ENCODE measurements at regions of chr9 and their contacts with region 1.

Region 1: GRCh38 chr9:131053896-131054295 is 42.4 kb upstream of the AIF1L start:
- DNase-seq: no peak
- H3K4me3 ChIP-seq: no peak overlapping the region
- H3K27ac ChIP-seq: no peak overlapping the region
- H3K4me1 ChIP-seq: no peaks in the 10 kb centered on the region
- H3K27me3 ChIP-seq: no peaks in the 10 kb centered on the region
- CTCF ChIP-seq: no peak
- EP300 ChIP-seq: no peak
- POLR2A ChIP-seq: no peak
- RAD21 ChIP-seq: no peak

Region 2: DNA sequence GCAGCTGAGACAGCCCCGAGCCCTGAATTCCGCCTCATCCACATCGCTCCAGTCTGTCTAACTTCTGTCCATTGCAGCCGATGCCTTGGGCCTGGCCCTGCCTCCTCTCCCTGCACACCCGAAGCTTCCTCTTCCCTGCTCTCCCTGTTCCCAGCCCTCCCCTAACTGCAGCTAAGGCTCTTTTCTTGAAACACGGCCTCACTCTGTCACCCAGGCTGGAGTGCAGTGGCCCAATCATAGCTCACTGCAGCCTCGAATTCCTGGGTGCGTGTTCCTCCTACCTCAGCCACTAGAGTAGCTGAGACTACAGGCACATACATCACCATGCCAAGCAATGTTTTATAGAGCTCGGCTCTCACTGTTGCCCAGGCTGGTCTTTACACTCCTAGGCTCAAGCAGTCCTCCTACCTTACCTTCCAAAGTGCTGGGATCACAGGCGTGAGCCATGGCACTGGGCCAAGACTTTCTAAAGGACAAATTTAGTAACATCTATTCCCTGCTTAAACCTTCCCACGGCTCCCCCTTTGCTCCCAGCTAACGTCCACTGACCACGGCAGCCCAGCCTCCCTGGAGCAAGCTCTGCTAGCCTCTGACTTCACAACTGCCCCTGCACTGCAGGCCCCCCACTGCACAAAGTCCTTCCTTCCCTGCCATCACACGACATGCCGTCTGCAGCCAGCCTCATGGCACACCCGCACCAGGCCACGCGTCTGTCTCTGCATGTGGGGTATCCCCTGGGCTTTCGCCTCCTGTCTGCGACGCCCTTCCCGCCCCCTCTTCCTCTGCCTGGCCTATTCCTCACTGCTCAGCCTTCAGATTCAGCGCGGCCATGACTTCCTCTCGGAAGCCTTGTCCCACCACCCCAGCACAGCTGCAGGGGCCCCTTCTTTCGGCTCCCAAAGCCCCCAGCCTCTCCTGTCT is 16.3 kb before region 1 on chr9:
- CTCF ChIA-PET with region 1: interaction called, 52 read pairs
- POLR2A ChIA-PET with region 1: interaction called, 3 read pairs
- DNase-seq: no peak
- H3K4me3 ChIP-seq: no peak overlapping the region
- H3K27ac ChIP-seq: no peak overlapping the region
- H3K4me1 ChIP-seq: no peaks in the 10 kb centered on the region; a peak in 2 of 7 replicates
- H3K27me3 ChIP-seq: no peaks in the 10 kb centered on the region
- CTCF ChIP-seq: no peak
- EP300 ChIP-seq: no peak
- POLR2A ChIP-seq: no peak
- RAD21 ChIP-seq: no peak

Region 3: GRCh38 chr9:131068076-131068816 is 14.3 kb after region 1 on chr9:
- CTCF ChIA-PET with region 1: interaction called, 54 read pairs
- POLR2A ChIA-PET with region 1: no interaction called
- DNase-seq: no peak
- H3K4me3 ChIP-seq: no peak overlapping the region
- H3K27ac ChIP-seq: no peak overlapping the region
- H3K4me1 ChIP-seq: no peaks in the 10 kb centered on the region
- H3K27me3 ChIP-seq: no peaks in the 10 kb centered on the region
- CTCF ChIP-seq: no peak
- EP300 ChIP-seq: no peak
- POLR2A ChIP-seq: no peak
- RAD21 ChIP-seq: no peak

Region 4: GRCh38 chr9:131076347-131077195 is 22.7 kb after region 1 on chr9:
- CTCF ChIA-PET with region 1: interaction called, 54 read pairs
- POLR2A ChIA-PET with region 1: no interaction called
- DNase-seq: no peak
- H3K4me3 ChIP-seq: no peak overlapping the region
- H3K27ac ChIP-seq: no peak overlapping the region
- H3K4me1 ChIP-seq: no peaks in the 10 kb centered on the region; a peak in 1 of 7 replicates
- H3K27me3 ChIP-seq: no peaks in the 10 kb centered on the region
- CTCF ChIP-seq: no peak
- EP300 ChIP-seq: no peak
- POLR2A ChIP-seq: no peak
- RAD21 ChIP-seq: no peak

Region 5: DNA sequence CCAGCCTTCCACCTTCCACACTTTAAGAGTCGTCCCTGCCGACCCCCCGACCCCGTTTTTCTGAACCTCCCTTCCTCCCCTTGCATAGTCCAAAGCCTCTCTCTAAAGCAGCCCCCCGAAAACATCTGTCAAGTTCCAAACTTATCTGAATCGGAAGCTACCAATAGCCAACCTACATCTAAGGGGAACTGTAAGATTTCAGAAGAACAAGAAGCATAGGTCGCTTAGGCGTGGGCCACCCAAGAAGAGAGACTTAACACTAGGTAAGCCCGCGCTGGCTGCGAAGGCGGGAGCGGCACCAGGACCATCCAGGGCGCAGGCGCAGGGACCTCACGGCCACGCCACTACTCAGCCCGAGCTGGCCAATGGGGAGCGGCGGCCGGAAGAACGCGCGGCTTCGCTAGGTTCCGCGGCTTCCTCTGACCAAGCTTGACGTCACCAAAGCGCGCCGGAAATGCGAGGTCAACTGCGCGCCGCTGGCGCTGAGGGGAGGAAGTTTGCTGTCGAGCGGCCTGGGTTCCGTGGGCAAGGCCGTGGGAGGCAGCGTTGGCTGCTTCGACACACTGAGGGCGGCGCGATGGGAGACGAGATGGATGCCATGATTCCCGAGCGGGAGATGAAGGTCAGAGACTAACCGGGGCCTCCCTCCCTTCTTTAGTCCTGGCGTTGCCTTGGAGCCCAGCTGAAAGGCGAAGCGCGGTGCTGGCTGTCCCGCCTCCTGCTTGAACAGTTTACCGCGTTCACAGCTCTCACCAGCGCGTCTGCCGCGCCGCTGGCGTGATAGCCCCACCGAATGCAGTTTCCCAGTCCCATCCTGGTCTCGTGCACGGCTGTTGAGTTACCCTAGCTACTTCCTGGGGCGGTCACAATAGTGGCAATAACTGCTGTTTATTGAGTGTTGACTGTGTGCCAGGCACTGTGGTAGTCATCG is 71.5 kb after region 1 on chr9 and contains the start of gene NUP214:
- CTCF ChIA-PET with region 1: interaction called, 10 read pairs
- POLR2A ChIA-PET with region 1: interaction called, 10 read pairs
- DNase-seq: peak; percentile 89 to 100
- H3K4me3 ChIP-seq: peak within 1 kb of the TSS; percentile 93 to 99 (median 96)
- H3K27ac ChIP-seq: peak within 1 kb of the TSS; percentile 90
- H3K4me1 ChIP-seq: peaks cover 0 to 3% (median 0%) of the 10 kb centered on the region in 4 experiments; a peak in 1 of 7 replicates
- H3K27me3 ChIP-seq: no peaks in the 10 kb centered on the region
- CTCF ChIP-seq: no peak
- EP300 ChIP-seq: peak in 1 of 2 experiments; percentile 13; a peak in 1 of 3 replicates
- POLR2A ChIP-seq: peak; percentile 94 to 96
- RAD21 ChIP-seq: no peak; a peak in 1 of 4 replicates
- total RNA-seq, gene NUP214: 39.0 and 50.2 TPM in 2 replicates

Measured in H1 (cell line).